PC-9 (cell line): ENCODE measurements at regions of chr16 and their contacts with region 1.

Region 1: DNA sequence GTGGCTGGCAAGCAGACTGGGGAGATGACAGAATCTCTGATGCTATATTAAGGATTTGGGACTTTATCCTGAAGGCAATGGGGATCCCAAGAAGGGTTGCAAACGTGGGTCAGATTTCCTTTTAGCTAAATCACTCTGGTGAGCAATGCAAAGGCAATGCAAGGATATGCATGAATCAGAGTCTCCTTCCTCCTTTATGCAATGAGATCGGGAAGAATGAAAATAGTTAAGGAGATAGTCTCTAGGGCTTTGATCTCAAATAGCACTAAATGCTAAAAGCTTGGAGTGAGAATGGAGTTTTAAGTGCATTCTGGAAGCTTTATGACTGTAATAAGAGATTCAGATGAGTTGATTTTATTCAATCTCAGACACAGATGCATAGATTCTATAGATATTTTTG is 27.2 kb upstream of the SHISA9 start:
- DNase-seq: peak; percentile 41 to 93
- H3K4me3 ChIP-seq: peak overlapping the region; percentile 5; the same call in 1 of the 2 replicates
- H3K27ac ChIP-seq: peak overlapping the region; percentile 97
- H3K4me1 ChIP-seq: peaks cover 78% of the 10 kb centered on the region
- H3K27me3 ChIP-seq: no peaks in the 10 kb centered on the region
- CTCF ChIP-seq: no peak

Region 2: GRCh38 chr16:12613131-12613991 is 260.8 kb before region 1 on chr16:
- CTCF ChIA-PET with region 1: no interaction called
- POLR2A ChIA-PET with region 1: interaction called, 5 read pairs
- intact Hi-C with region 1: loop called (anchors 5 kb)
- DNase-seq: peak; percentile 89 to 97
- H3K4me3 ChIP-seq: peak overlapping the region; percentile 46; the same call in 1 of the 2 replicates
- H3K27ac ChIP-seq: peak overlapping the region; percentile 100
- H3K4me1 ChIP-seq: peaks cover 55% of the 10 kb centered on the region
- H3K27me3 ChIP-seq: no peaks in the 10 kb centered on the region
- CTCF ChIP-seq: no peak

Region 3: DNA sequence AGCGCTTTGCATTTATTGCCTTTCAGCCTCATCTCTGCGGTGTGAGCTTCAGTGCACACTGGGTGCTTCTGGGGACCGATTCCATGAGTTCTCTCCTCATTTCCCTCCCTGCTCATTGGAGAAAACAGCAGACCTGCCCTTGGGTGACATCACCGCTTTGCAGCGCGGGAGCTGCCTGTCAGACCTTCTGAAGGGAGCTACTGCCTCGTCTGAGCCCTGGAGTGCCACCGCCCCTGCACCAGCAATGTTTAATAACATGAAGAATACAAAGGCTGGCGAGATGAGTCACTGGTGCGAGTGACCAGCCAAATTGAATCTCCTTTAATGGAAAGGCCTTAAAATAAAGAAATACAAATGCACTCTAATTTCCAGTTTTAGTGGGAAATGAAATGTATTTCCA is 40.2 kb before region 1 on chr16:
- CTCF ChIA-PET with region 1: no interaction called
- POLR2A ChIA-PET with region 1: no interaction called
- intact Hi-C with region 1: loop called (anchors 2 kb)
- DNase-seq: peak; percentile 92 to 95
- H3K4me3 ChIP-seq: peak overlapping the region; percentile 19; the same call in 1 of the 2 replicates
- H3K27ac ChIP-seq: peak overlapping the region; percentile 93
- H3K4me1 ChIP-seq: peaks cover 27% of the 10 kb centered on the region
- H3K27me3 ChIP-seq: no peaks in the 10 kb centered on the region
- CTCF ChIP-seq: no peak

Region 4: GRCh38 chr16:13021996-13022395 is 147.8 kb after region 1 on chr16:
- CTCF ChIA-PET with region 1: no interaction called
- POLR2A ChIA-PET with region 1: no interaction called
- intact Hi-C with region 1: no loop called
- DNase-seq: peak; percentile 62 to 77
- H3K4me3 ChIP-seq: no peak overlapping the region
- H3K27ac ChIP-seq: 0 out of 2 replicates have a peak overlapping the region, but pooled peaks have one; percentile 14
- H3K4me1 ChIP-seq: peaks cover 18% of the 10 kb centered on the region
- H3K27me3 ChIP-seq: no peaks in the 10 kb centered on the region
- CTCF ChIP-seq: no peak

Region 5: DNA sequence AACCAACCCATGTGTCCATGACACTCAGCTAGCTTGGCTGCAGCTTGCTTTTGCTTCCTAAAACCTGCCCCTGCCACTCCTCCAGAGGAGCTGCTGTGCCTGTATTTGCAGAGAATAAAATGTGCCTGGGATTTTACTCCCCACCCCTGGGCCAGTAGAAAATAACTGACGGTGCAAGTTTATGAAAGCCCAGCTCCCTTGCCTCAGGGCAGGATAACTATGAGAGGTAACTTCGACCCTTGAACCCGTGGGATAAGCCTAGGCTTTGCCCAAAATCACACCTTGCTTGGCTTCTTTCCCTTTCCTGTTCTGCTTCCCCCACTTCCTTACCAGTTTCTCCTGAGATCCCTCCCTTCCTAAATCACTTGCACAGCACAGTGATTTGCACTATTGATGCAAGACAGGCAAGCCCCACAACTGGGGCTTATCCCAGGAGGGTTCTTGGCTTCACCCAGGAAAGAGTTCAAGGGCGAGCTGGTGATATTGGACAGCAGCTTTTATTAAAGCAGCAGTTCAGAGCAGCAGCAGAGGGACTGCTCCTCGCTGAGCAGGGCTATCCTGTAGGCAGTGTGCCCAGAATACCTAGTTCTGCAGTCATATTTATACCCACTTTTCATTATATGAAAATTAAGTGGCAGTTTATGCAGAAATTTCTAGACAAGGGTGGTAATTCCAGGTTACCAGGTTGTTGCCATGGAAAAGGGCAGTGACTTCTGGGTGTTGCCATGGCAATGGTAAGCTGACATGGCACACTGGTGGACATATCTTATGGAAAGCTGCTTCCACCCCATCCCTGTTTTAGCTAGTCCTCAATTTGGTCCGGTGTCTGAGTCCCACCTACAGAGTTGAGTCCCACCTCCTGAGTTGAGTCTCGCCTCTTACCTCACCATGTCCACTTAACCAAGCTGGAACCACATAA is 1039.4 kb after region 1 on chr16:
- CTCF ChIA-PET with region 1: no interaction called
- POLR2A ChIA-PET with region 1: interaction called, 28 read pairs
- intact Hi-C with region 1: no loop called
- DNase-seq: no peak
- H3K4me3 ChIP-seq: no peak overlapping the region
- H3K27ac ChIP-seq: no peak overlapping the region
- H3K4me1 ChIP-seq: no peaks in the 10 kb centered on the region
- H3K27me3 ChIP-seq: peaks cover 10% of the 10 kb centered on the region
- CTCF ChIP-seq: no peak